Ascending aorta (tissue), 2 donors: ENCODE measurements at regions of chr12 and their contacts with region 1.

Region 1: GRCh38 chr12:100234598-100235304 is 32.1 kb downstream of the DEPDC4 start:
- DNase-seq: no peak
- H3K4me3 ChIP-seq: no peak overlapping the region
- H3K27ac ChIP-seq: peak overlapping the region in 1 of 2 donors; percentile 30
- H3K4me1 ChIP-seq: no peaks in the 10 kb centered on the region
- H3K27me3 ChIP-seq: no peaks in the 10 kb centered on the region
- CTCF ChIP-seq: peak; percentile 48 to 79 (median 66)

Region 2: DNA sequence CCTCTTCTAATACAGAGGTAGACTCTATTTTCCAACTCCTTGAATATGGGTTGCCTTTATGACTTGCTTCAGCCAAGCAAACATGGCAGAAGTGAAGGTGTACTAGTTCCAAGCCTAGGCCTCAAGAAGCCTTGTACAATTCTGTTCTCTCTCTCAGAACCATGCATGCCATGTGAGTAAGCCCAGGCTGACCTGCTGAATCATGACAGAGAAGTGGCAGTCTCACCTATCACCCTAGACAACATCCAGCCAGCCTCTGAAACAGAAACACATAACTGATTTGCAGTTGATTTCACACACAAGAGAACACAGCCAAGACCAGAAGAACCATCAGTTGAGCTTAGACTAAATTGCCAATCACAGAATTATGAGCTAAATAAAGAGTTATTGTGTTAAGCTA is 430.0 kb before region 1 on chr12:
- intact Hi-C with region 1: no loop called
- DNase-seq: no peak
- H3K4me3 ChIP-seq: no peak overlapping the region
- H3K27ac ChIP-seq: no peak overlapping the region
- H3K4me1 ChIP-seq: no peaks in the 10 kb centered on the region
- H3K27me3 ChIP-seq: no peaks in the 10 kb centered on the region
- CTCF ChIP-seq: no peak

Region 3: GRCh38 chr12:100554608-100555077 is 319.9 kb after region 1 on chr12:
- intact Hi-C with region 1: loop called (anchors 5 kb)
- DNase-seq: no peak
- H3K4me3 ChIP-seq: no peak overlapping the region
- H3K27ac ChIP-seq: no peak overlapping the region
- H3K4me1 ChIP-seq: no peaks in the 10 kb centered on the region
- H3K27me3 ChIP-seq: no peaks in the 10 kb centered on the region
- CTCF ChIP-seq: peak; percentile 52 to 70 (median 61)

Region 4: GRCh38 chr12:100737168-100737567 is 502.4 kb after region 1 on chr12:
- intact Hi-C with region 1: loop called (anchors 5 kb)
- DNase-seq: no peak
- H3K4me3 ChIP-seq: no peak overlapping the region
- H3K27ac ChIP-seq: no peak overlapping the region
- H3K4me1 ChIP-seq: no peaks in the 10 kb centered on the region
- H3K27me3 ChIP-seq: no peaks in the 10 kb centered on the region
- CTCF ChIP-seq: no peak